Activated naive CD4-positive, alpha-beta T cell treated with anti-CD3 and anti-CD28 coated beads, Interleukin-2, amount 10 ng/mL, durations not matched to agents 7 days and 5 days (primary cell): ENCODE measurements at regions of chr4 and their contacts with region 1.

Region 1: GRCh38 chr4:185039508-185040273 is 21.4 kb downstream of the HELT start:
- DNase-seq: peak; percentile 64
- H3K4me3 Mint-ChIP-seq: no peak overlapping the region
- H3K27ac Mint-ChIP-seq: peak overlapping the region; percentile 53
- H3K4me1 Mint-ChIP-seq: peaks cover 6% of the 10 kb centered on the region
- H3K27me3 Mint-ChIP-seq: peaks cover 38% of the 10 kb centered on the region

Region 2: GRCh38 chr4:185023471-185023870 is 16.2 kb before region 1 on chr4:
- CTCF ChIA-PET with region 1: interaction called, 12 read pairs
- DNase-seq: no peak
- H3K4me3 Mint-ChIP-seq: no peak overlapping the region
- H3K27ac Mint-ChIP-seq: no peak overlapping the region
- H3K4me1 Mint-ChIP-seq: peaks cover 10% of the 10 kb centered on the region
- H3K27me3 Mint-ChIP-seq: peaks cover 85% of the 10 kb centered on the region

Region 3: GRCh38 chr4:185096032-185096653 is 56.5 kb after region 1 on chr4:
- CTCF ChIA-PET with region 1: interaction called, 29 read pairs
- DNase-seq: peak; percentile 26
- H3K4me3 Mint-ChIP-seq: no peak overlapping the region
- H3K27ac Mint-ChIP-seq: no peak overlapping the region
- H3K4me1 Mint-ChIP-seq: no peaks in the 10 kb centered on the region
- H3K27me3 Mint-ChIP-seq: peaks cover 15% of the 10 kb centered on the region

Region 4: GRCh38 chr4:185134307-185134869 is 94.7 kb after region 1 on chr4:
- CTCF ChIA-PET with region 1: interaction called, 21 read pairs
- DNase-seq: no peak
- H3K4me3 Mint-ChIP-seq: no peak overlapping the region
- H3K27ac Mint-ChIP-seq: no peak overlapping the region
- H3K4me1 Mint-ChIP-seq: no peaks in the 10 kb centered on the region
- H3K27me3 Mint-ChIP-seq: peaks cover 45% of the 10 kb centered on the region

Region 5: DNA sequence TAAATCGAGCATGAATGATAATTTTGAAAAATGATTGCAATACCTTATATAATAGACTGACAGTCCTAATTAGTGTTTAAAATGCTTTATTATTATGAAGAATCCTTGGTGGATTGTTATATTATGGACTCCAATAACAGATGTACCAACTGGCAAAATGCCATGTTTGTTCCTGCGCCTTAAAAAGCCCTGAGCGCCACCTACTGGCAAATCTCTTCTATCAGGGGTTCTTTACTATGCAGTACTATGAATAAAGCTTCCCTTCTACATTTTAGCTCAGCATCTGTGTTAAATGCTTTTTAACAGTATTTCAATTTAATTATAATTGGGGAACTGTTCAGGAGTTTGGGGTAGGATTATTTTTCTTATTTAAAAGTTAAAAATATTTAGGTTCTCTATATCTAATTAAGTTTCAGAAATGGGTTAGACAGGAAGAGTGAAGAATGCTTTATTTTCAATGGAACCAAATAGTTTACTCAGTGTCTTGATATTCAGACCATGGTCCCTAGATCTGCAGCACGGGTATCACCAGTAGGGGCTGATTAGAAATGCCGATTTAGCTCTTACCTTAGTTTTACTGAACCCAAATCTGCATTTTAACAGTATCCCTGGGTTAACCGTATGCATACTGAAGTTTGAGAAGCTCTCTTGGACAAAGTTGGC is 144.1 kb after region 1 on chr4:
- CTCF ChIA-PET with region 1: interaction called, 22 read pairs
- DNase-seq: peak; percentile 84
- H3K4me3 Mint-ChIP-seq: no peak overlapping the region
- H3K27ac Mint-ChIP-seq: no peak overlapping the region
- H3K4me1 Mint-ChIP-seq: peaks cover 7% of the 10 kb centered on the region
- H3K27me3 Mint-ChIP-seq: no peaks in the 10 kb centered on the region